OCI-LY7 (cell line): ENCODE measurements at regions of chr11 and their contacts with region 1.

Region 1: DNA sequence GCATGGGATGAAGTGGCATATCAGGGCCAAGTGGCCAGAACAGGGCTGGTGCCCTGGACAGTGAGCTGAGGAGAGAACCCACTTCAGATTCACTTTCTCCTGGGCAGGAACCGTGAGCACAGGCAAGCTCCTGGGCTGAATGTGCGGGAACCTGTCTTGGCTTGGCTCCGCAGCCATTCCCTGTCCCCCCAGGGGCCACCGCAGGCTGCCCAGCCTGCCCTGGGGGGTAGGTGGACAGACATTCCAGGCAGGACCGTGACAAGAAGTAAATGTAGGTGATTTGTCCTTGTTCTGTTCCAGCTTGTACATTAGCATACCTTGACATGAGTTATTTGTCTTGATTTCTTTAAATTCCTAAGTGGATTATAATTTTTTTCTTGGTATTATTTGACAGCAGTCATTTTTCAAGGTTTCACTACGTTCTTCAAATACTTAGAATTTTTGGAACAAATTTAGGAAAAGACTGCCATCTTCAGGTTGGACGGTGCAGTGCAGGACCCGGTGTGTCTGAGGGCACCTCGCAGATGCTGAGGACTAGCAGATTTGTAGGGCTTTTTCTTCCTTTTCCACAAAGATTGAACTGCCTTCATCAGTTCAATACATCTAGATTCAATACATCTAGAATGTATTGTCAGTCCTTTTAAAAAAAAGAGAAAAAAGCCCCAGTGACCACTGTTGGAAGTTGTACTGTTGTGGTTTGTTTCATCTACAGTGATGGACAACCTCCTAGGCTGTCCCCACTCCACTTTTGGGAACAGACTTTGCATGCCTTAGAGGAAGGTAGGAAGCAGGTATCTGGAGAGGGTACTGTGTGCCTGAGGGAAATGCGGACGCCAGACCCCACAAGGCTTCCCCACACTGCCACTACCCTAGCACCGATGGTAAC is 115.1 kb upstream of the RASSF10 start:
- DNase-seq: peak; percentile 52
- H3K4me3 ChIP-seq: no peak overlapping the region
- H3K27ac ChIP-seq: no peak overlapping the region
- H3K4me1 ChIP-seq: no peaks in the 10 kb centered on the region
- CTCF ChIP-seq: peak; percentile 94

Region 2: DNA sequence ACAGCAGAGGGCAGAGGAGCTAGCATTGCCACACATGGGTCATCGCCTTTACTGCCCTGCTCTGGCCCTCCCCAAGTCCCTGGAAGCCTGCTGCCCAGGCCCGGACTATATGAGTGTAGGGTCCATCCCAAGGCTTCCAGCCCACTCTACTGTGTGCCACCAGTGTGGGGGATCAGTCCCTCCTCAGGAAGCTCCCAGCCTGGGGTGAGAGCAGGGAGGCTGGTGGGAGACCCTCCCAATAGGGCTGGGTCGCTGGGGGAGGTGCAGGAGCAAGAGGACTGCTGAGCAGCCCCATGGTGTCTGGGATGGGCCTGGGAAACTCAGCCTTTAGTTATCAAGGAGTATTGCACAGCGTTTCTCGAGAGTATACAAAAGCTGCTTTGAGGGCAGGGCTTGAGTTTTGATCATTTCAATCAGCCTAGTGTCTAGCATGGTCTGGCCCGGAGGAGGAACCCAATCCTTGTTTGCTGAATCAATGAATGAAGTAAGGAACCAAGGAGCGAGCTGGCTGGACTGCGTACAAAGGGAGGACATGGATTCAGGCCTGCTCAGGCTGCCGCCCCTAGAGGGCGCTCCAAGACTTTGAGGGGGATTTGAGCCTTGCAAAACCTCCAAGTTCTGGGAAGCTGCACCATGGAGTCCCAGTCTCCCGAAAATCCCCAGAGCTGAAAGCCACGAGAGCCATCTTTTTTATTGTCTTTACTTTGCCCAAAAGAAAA is 605.7 kb before region 1 on chr11:
- CTCF ChIA-PET with region 1: no interaction called
- POLR2A ChIA-PET with region 1: no interaction called
- intact Hi-C with region 1: loop called (anchors 5 kb)
- DNase-seq: peak; percentile 47
- H3K4me3 ChIP-seq: no peak overlapping the region
- H3K27ac ChIP-seq: no peak overlapping the region
- H3K4me1 ChIP-seq: no peaks in the 10 kb centered on the region
- CTCF ChIP-seq: peak; percentile 90

Region 3: DNA sequence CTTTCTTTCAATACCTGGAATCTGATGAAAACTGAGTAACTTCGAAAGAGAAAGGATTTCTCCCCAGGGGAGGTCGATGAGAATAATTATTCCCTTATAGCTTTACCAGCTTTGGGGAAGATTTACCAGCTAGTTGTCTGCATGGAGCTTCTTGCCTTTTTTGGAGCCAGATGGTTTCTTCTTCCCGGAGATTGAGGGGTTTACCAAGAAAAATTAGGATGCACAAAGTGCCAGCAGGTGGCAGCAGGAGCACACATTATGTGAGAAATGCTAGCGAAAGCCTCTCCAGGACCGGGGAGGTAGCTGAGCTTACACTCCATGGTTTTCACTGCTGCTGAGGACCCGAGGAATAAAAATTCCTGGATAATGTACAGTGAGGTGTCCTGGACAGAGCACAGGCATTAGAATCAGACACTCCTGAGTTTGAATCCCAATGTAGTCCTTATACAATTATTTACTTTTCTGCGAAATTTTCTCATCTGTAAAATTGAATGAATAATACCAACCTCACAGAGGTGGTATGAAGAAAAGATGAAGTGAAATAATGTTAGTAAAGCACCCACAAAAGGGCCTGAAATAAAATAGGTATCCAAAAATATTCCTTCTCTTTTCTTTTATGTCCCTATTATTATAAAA is 562.7 kb before region 1 on chr11:
- CTCF ChIA-PET with region 1: interaction called, 4 read pairs
- POLR2A ChIA-PET with region 1: no interaction called
- intact Hi-C with region 1: loop called (anchors 2 kb)
- DNase-seq: peak; percentile 68
- H3K4me3 ChIP-seq: no peak overlapping the region
- H3K27ac ChIP-seq: no peak overlapping the region
- H3K4me1 ChIP-seq: no peaks in the 10 kb centered on the region
- CTCF ChIP-seq: peak; percentile 85

Region 4: GRCh38 chr11:12599408-12600143 is 294.5 kb before region 1 on chr11:
- CTCF ChIA-PET with region 1: no interaction called
- POLR2A ChIA-PET with region 1: interaction called, 3 read pairs
- intact Hi-C with region 1: loop called (anchors 2 kb)
- DNase-seq: peak; percentile 47
- H3K4me3 ChIP-seq: no peak overlapping the region
- H3K27ac ChIP-seq: no peak overlapping the region
- H3K4me1 ChIP-seq: no peaks in the 10 kb centered on the region
- CTCF ChIP-seq: peak; percentile 87